ENCODE measurements at regions of chr10 and their contacts with region 1.

Region 1: GRCh38 chr10:121886997-121887622 is 40.7 kb downstream of the ATE1 start:
- DNase-seq: peak; percentile 51
- H3K4me3 ChIP-seq: no peak overlapping the region
- H3K27ac ChIP-seq: no peak overlapping the region
- H3K4me1 ChIP-seq: no peaks in the 10 kb centered on the region
- H3K27me3 ChIP-seq: no peaks in the 10 kb centered on the region
- CTCF ChIP-seq: peak; percentile 96 to 98

Region 2: GRCh38 chr10:121069061-121069850 is 817.9 kb before region 1 on chr10:
- CTCF ChIA-PET with region 1: no interaction called
- dilution Hi-C with region 1: no loop called
- in situ Hi-C with region 1: no loop called
- intact Hi-C with region 1: loop called (anchors 10 kb)
- DNase-seq: peak; percentile 98
- H3K4me3 ChIP-seq: no peak overlapping the region
- H3K27ac ChIP-seq: peak overlapping the region; percentile 86
- H3K4me1 ChIP-seq: peaks cover 20% of the 10 kb centered on the region
- H3K27me3 ChIP-seq: no peaks in the 10 kb centered on the region
- CTCF ChIP-seq: no peak

Region 3: DNA sequence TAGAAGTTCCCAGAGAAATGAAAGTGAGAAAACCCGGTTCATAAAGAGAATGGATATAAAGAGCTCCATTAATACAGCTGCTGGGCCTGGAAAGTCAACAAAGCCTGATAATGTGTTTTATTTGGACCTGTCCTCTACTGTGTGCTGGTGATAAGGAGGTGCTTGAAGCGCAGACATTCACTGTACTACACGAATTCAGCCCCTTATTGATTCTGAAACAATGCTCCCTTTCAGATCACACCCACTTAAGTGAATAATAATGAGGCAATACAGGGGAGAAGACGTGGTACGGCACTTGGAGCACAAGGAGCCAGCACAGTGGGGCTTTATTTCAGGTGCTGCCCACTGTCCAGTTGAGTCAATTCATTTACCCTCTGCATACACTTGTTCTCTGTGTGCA is 549.7 kb before region 1 on chr10:
- CTCF ChIA-PET with region 1: no interaction called
- dilution Hi-C with region 1: no loop called
- in situ Hi-C with region 1: no loop called
- intact Hi-C with region 1: no loop called
- DNase-seq: no peak
- H3K4me3 ChIP-seq: no peak overlapping the region
- H3K27ac ChIP-seq: no peak overlapping the region
- H3K4me1 ChIP-seq: peaks cover 15% of the 10 kb centered on the region
- H3K27me3 ChIP-seq: no peaks in the 10 kb centered on the region
- CTCF ChIP-seq: no peak

Region 4: GRCh38 chr10:121392657-121393056 is 494.5 kb before region 1 on chr10:
- CTCF ChIA-PET with region 1: no interaction called
- dilution Hi-C with region 1: no loop called
- in situ Hi-C with region 1: no loop called
- intact Hi-C with region 1: loop called (anchors 10 kb)
- DNase-seq: no peak
- H3K4me3 ChIP-seq: peak overlapping the region in 2 of 3 experiments; percentile 13 to 26
- H3K27ac ChIP-seq: no peak overlapping the region
- H3K4me1 ChIP-seq: no peaks in the 10 kb centered on the region
- H3K27me3 ChIP-seq: no peaks in the 10 kb centered on the region
- CTCF ChIP-seq: peak; percentile 8 to 24

Region 5: GRCh38 chr10:121753726-121754476 is 133.2 kb before region 1 on chr10:
- CTCF ChIA-PET with region 1: no interaction called
- dilution Hi-C with region 1: no loop called
- in situ Hi-C with region 1: no loop called
- intact Hi-C with region 1: loop called (anchors 5 kb)
- DNase-seq: peak; percentile 88
- H3K4me3 ChIP-seq: peak overlapping the region in 1 of 3 experiments; percentile 20
- H3K27ac ChIP-seq: peak overlapping the region; percentile 98
- H3K4me1 ChIP-seq: peaks cover 17% of the 10 kb centered on the region
- H3K27me3 ChIP-seq: no peaks in the 10 kb centered on the region
- CTCF ChIP-seq: peak; percentile 38 to 42

Region 6: DNA sequence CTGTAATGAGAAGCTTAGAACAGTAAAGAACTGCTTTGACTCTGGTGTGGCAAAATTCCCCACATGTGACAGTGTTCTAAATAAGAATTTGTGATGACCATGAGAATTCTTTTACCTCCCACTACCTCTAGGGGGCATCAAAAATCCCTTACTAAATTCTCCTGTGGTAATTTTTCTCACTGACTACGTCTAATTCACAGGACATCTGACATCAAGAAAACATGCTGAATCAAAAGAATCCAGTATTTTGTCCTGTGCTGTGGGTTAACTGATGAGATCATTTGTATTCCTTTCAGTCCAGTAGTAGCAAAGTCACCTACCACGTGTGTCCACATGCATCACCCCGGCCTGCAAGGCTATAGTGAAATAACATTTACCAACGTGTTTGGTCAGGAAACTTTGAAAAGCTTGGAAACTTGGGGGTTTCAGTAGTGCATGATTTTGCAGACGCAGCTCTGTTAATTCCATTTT is 63.1 kb before region 1 on chr10:
- CTCF ChIA-PET with region 1: no interaction called
- dilution Hi-C with region 1: no loop called
- in situ Hi-C with region 1: no loop called
- intact Hi-C with region 1: loop called (anchors 1 kb)
- DNase-seq: peak; percentile 21
- H3K4me3 ChIP-seq: no peak overlapping the region
- H3K27ac ChIP-seq: no peak overlapping the region
- H3K4me1 ChIP-seq: no peaks in the 10 kb centered on the region
- H3K27me3 ChIP-seq: no peaks in the 10 kb centered on the region
- CTCF ChIP-seq: peak; percentile 72 to 73

Measured in mammary epithelial cell (primary cell).